Activated T-helper 1 cell treated with anti-CD3 and anti-CD28 coated beads, Interleukin-12 subunit alpha, Interleukin-12 subunit beta, Interleukin-2, Interleukin-4 antibody, amounts not matched to agents 30 ng/mL and 10 ng/mL and 1 ng/mL, durations not matched to agents 14 hours and 24 hours and 36 hours (primary cell): ENCODE measurements at regions of chrX and their contacts with region 1.

Region 1: DNA sequence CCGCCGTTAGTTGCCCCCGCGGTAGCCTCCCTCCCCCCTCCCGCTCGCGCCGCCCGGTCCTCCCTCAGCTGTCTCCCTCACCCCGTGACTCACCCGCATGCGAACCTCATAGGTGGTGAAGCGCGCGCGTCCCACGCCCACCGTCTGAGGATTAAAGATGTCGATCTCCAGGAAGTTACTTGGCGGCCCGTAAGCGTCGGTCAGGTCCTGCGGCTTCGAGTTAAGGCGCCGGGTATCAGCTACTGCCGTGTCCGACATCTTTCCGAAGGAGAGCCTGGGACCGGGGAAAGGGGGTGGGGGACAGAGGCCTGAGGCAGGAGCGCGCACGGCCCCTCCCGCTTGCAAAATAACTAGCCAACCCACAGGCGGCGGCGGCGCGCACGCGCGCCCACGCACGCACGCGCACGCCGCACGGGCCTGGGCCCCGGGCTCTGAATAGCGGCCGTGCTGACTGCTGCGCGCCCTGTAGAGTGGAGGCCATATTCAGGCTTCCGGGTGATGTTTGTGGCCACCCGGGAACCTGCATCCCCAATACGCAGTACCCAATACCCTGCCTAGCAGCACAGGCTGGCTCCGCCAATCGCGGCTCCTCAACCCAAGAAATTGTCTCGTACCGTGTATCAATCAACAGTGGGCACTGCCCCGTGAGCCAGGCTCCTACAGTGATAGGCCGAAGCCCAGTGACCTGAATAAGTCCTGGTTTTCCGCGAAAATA is at the start of gene SNX12:
- DNase-seq: peak; percentile 85
- H3K4me3 Mint-ChIP-seq: peak within 1 kb of the TSS; percentile 98
- H3K27ac Mint-ChIP-seq: peak within 1 kb of the TSS; percentile 96
- H3K4me1 Mint-ChIP-seq: peaks cover 22% of the 10 kb centered on the region
- H3K27me3 Mint-ChIP-seq: peaks cover 7% of the 10 kb centered on the region
- total RNA-seq, gene SNX12: 47.9 and 51.9 TPM in 2 replicates

Region 2: GRCh38 chrX:71081330-71082148 is 13.3 kb after region 1 on chrX:
- intact Hi-C with region 1: no loop called
- DNase-seq: no peak
- H3K4me3 Mint-ChIP-seq: no peak overlapping the region
- H3K27ac Mint-ChIP-seq: no peak overlapping the region
- H3K4me1 Mint-ChIP-seq: no peaks in the 10 kb centered on the region
- H3K27me3 Mint-ChIP-seq: peaks cover 5% of the 10 kb centered on the region

Region 3: GRCh38 chrX:71111141-71111843 is 43.1 kb after region 1 on chrX and contains the start of gene IL2RG:
- intact Hi-C with region 1: loop called (anchors 1 kb)
- DNase-seq: peak; percentile 75
- H3K4me3 Mint-ChIP-seq: peak within 1 kb of the TSS; percentile 99
- H3K27ac Mint-ChIP-seq: peak within 1 kb of the TSS; percentile 92
- H3K4me1 Mint-ChIP-seq: peaks cover 52% of the 10 kb centered on the region
- H3K27me3 Mint-ChIP-seq: no peaks in the 10 kb centered on the region
- total RNA-seq, gene IL2RG: 375 and 397 TPM in 2 replicates

Region 4: DNA sequence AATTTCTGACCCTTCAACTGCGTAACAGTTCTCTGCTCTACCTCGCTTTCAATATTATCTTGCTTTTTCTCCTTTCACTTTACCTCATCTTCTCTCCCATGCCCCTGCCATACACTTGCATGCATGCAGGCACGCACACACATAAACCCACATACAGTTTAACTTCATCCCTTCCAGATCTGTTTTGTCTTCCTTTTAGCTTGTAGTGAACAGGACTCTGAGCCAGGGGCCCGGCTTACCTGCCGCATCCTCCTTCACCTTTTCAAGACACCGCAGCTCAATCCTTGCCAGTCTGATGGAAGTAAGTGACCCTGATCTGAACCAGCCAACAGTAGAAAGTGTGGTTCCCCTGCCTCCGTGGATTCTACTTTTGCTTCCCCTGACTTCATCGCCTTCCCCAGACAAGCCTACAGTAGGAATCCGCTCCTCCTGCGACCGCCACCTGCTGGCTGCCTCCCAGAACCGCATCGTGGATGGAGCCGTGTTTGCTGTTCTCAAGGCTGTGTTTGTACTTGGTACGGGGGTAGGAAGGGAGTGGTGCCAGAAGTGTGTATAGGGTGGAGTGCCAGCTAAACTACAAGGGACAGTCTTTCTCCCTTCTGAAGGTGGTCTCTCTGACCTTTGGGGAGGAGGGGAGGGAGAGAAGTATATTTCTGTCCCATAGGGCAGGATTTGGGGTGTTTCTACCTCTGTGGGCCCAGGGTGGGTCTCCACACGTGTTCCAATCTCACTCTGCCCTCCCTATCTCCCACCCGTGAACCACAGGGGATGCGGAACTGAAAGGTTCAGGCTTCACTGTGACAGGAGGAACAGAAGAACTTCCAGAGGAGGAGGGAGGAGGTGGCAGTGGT is 60.9 kb after region 1 on chrX:
- intact Hi-C with region 1: loop called (anchors 1 kb)
- DNase-seq: peak; percentile 61
- H3K4me3 Mint-ChIP-seq: peak overlapping the region; percentile 46
- H3K27ac Mint-ChIP-seq: peak overlapping the region; percentile 63
- H3K4me1 Mint-ChIP-seq: peaks cover 19% of the 10 kb centered on the region
- H3K27me3 Mint-ChIP-seq: peaks cover 1% of the 10 kb centered on the region

Region 5: GRCh38 chrX:71254092-71254941 is 186.1 kb after region 1 on chrX and contains the start of gene ZMYM3:
- intact Hi-C with region 1: loop called (anchors 1 kb)
- DNase-seq: peak; percentile 69
- H3K4me3 Mint-ChIP-seq: peak within 1 kb of the TSS; percentile 88
- H3K27ac Mint-ChIP-seq: peak within 1 kb of the TSS; percentile 71
- H3K4me1 Mint-ChIP-seq: peaks cover 30% of the 10 kb centered on the region
- H3K27me3 Mint-ChIP-seq: no peaks in the 10 kb centered on the region
- total RNA-seq, gene ZMYM3: 12.6 and 13.2 TPM in 2 replicates

Region 6: GRCh38 chrX:71365876-71366673 is 297.9 kb after region 1 on chrX and contains the start of gene TAF1:
- intact Hi-C with region 1: loop called (anchors 1 kb)
- DNase-seq: peak; percentile 88
- H3K4me3 Mint-ChIP-seq: peak within 1 kb of the TSS; percentile 97
- H3K27ac Mint-ChIP-seq: peak within 1 kb of the TSS; percentile 99
- H3K4me1 Mint-ChIP-seq: peaks cover 21% of the 10 kb centered on the region
- H3K27me3 Mint-ChIP-seq: no peaks in the 10 kb centered on the region
- total RNA-seq, gene TAF1: 41.4 and 46.1 TPM in 2 replicates